ENCODE measurements at regions of chr20 and their contacts with region 1.

Region 1: DNA sequence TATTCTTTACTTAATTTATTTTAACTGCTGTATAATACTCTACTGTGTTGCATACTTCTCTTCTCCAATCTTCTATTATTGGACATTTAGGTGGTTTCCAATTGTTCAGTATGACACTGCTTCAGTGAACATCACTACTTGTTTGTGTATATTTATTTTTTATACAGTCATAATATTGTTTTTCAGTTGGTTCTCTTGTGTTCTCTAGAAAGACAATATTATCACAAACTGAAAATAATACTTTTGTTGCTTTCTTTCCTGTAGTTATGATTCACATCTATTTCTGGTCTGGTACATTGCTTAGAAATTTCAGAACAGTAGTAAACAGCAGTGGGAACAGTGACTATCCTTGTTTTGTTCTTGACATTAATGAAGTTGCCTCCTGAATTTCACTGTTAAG is 62.8 kb upstream of the GTSF1L start:
- DNase-seq: no peak

Region 2: DNA sequence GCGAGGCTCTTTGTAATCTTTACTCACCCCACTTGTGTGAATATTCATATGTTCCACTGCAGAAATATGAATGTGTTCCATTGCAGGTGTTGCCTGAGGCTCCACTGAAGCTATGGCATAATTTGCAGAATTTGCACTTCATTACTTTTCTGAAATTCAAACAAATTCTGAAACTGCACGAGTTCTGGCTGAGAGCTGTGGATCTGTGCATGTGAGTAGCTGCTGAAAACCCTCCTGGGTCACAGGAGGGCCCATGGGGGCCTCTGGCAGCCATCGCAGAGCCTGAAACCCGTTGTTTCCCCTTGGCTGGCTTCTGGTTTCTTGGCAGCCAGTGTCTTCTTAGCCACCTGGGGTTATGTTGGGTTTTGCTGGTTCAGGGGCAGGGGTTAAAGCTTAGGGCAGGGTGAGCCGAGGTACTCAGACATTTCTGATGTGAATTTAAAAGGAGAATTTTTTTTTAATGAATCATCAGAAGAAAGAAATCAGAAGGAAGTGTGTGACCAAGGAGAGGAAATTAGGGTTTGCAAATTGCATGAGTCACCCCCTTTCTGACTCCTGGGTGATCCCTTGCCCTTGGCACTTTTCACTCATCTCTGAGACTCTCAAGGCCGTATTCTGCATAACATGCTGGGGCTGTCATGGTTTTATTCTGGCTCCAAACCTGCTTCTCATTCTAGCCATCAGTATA is 165.6 kb after region 1 on chr20:
- intact Hi-C with region 1: loop called in 1 of 2 experiments (anchors 5 kb)
- DNase-seq: peak; percentile 40

Measured in posterior vena cava (tissue), 2 donors.